ENCODE measurements at regions of chr6 and their contacts with region 1.

Region 1: DNA sequence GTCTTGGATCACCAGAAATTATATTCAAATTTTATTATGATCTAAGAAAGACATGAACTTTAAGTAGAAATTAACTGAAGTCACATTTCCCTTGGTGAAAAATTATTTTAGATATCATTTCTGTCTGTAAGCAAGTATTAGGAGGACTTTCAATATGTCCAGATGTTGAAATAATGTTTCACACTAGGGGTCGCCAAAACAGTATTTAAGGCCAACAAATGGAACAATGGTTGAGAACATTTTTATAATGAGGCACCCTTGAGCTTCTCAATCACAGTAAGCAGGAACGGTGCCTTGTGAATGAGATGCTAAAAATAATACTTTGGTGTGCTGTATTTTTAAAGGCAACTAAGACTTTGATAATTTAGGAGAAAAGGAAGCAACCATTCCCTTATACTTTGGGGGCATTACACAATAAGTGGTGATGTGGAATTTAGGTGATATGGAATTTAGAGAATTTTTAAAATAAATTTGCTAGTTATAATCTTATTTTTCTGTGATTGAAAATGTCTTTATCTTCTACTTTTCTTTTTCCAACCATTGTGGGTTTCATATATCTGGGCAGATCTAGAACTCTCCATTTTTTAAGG is 9.6 kb upstream of the SF3B5 start:
- DNase-seq: peak in 1 of 2 donors; percentile 89
- H3K4me3 ChIP-seq: no peak overlapping the region
- H3K27ac ChIP-seq: no peak overlapping the region
- H3K4me1 ChIP-seq: no peaks in the 10 kb centered on the region
- H3K27me3 ChIP-seq: no peaks in the 10 kb centered on the region
- CTCF ChIP-seq: peak in 5 of 7 experiments; percentile 25 to 61 (median 48)
- EP300 ChIP-seq: no peak
- POLR2A ChIP-seq: no peak

Region 2: DNA sequence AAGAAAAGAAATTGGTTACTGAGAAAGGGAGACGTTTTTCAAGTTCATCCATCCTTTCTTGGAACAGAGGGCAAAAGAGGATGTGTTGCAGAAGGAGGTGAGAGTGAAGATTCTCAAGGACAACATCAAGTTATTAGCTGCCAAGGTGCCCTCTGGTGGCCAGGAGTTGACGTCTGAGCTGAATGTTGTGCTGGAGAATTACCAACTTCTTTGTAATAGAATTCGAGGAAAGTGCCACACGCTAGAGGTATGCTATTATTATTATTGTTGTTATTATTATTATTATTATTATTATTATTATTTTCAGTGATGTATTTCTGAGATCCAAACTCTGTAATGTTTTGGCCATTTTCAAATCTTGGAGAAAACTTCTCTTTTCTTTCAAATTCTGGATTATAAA is 377.1 kb after region 1 on chr6:
- intact Hi-C with region 1: loop called (anchors 5 kb)
- DNase-seq: peak; percentile 83 to 90
- H3K4me3 ChIP-seq: no peak overlapping the region
- H3K27ac ChIP-seq: no peak overlapping the region
- H3K4me1 ChIP-seq: no peaks in the 10 kb centered on the region
- H3K27me3 ChIP-seq: no peaks in the 10 kb centered on the region
- CTCF ChIP-seq: peak in 5 of 7 experiments; percentile 47 to 69 (median 52)
- EP300 ChIP-seq: no peak
- POLR2A ChIP-seq: no peak

Region 3: DNA sequence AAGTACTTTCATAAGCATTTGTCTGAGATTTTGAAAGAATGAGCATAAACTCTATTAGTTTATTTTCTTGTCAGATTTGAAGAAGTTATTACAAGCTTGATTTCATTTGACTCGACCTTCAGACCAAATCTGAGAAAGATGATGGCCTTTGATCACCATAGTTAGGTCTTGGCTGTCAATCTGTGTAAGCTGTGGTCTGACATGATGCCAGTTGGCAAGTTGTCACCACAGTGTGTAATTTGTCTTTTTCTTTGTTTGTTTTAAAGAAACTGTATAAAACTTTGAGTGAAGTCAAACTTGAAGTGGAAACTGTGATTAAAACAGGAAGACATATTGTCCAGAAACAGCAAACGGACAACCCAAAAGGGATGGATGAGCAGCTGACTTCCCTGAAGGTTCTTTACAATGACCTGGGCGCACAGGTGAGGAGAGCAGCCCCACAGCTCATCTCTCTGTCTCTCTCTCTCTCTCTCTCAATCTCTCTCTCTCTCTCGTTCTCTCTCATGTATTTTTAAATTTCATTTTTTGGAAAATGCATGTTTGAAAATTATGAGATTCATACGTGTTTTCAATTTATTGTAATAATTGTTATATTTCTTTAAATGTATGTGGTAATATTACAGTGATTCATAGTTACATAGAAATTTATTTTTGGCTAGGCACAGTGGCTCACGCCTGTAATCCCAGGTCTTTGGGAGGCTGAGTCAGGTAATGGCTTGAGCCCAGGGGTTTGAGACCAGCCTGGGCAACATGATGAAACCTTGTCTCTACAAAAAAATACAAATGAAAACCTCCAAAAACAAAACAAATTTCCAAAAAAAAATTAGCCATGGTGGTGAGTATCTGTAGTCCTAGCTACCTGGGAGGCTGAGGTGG is 388.3 kb after region 1 on chr6:
- intact Hi-C with region 1: loop called (anchors 5 kb)
- DNase-seq: no peak
- H3K4me3 ChIP-seq: no peak overlapping the region
- H3K27ac ChIP-seq: no peak overlapping the region
- H3K4me1 ChIP-seq: no peaks in the 10 kb centered on the region
- H3K27me3 ChIP-seq: no peaks in the 10 kb centered on the region
- CTCF ChIP-seq: no peak
- EP300 ChIP-seq: no peak
- POLR2A ChIP-seq: no peak

Measured in stomach (tissue), 19 donors.